ENCODE measurements at regions of chr16 and their contacts with region 1.

Region 1: GRCh38 chr16:17369421-17370222 is 101.1 kb downstream of the XYLT1 start:
- DNase-seq: peak; percentile 60 to 94 (median 81)
- ATAC-seq: peak; percentile 82
- H3K4me3 ChIP-seq: peak overlapping the region; percentile 28 to 49
- H3K4me3 Mint-ChIP-seq: peak overlapping the region; percentile 82
- H3K27ac ChIP-seq: peak overlapping the region; percentile 78 to 84
- H3K27ac Mint-ChIP-seq: peak overlapping the region; percentile 97
- H3K4me1 ChIP-seq: peaks cover 73% of the 10 kb centered on the region
- H3K4me1 Mint-ChIP-seq: peaks cover 89% of the 10 kb centered on the region
- H3K27me3 ChIP-seq: no peaks in the 10 kb centered on the region
- H3K27me3 Mint-ChIP-seq: no peaks in the 10 kb centered on the region
- CTCF ChIP-seq: no peak

Region 2: DNA sequence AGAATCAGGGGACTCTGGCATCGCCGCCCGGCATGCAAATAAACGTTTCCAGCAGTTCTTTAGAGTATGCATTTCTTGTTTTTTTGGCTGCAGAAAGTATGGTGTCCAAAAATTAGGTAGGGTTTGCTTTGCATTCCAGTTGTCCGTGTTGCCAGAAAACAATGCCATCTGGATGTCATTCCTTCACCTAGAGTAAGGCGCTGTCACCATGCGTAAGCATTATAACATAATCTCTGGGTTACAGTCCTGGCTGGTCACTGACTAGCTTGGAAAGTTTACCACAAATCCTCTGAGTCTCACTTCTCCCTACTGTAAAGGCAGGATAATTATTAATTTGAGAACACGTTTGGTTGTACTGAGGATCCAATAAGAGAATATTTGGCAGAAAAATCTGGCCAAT is 356.6 kb before region 1 on chr16:
- CTCF ChIA-PET with region 1: no interaction called
- POLR2A ChIA-PET with region 1: interaction called, 3 read pairs
- intact Hi-C with region 1: loop called in 1 of 2 experiments (anchors 5 kb)
- DNase-seq: no peak
- ATAC-seq: no peak
- H3K4me3 ChIP-seq: peak overlapping the region in 1 of 2 experiments; percentile 44
- H3K4me3 Mint-ChIP-seq: peak overlapping the region; percentile 77
- H3K27ac ChIP-seq: peak overlapping the region; percentile 69 to 78
- H3K27ac Mint-ChIP-seq: peak overlapping the region; percentile 99
- H3K4me1 ChIP-seq: peaks cover 13% of the 10 kb centered on the region
- H3K4me1 Mint-ChIP-seq: peaks cover 30% of the 10 kb centered on the region
- H3K27me3 ChIP-seq: no peaks in the 10 kb centered on the region
- H3K27me3 Mint-ChIP-seq: peaks cover 6% of the 10 kb centered on the region
- CTCF ChIP-seq: no peak

Region 3: GRCh38 chr16:17070882-17071592 is 298.6 kb before region 1 on chr16:
- CTCF ChIA-PET with region 1: no interaction called
- POLR2A ChIA-PET with region 1: no interaction called
- intact Hi-C with region 1: loop called in 1 of 2 experiments (anchors 10 kb)
- DNase-seq: peak; percentile 51 to 94 (median 74)
- ATAC-seq: peak; percentile 85
- H3K4me3 ChIP-seq: peak overlapping the region; percentile 32 to 51
- H3K4me3 Mint-ChIP-seq: peak overlapping the region; percentile 87
- H3K27ac ChIP-seq: peak overlapping the region; percentile 67 to 68
- H3K27ac Mint-ChIP-seq: peak overlapping the region; percentile 97
- H3K4me1 ChIP-seq: peaks cover 4% of the 10 kb centered on the region
- H3K4me1 Mint-ChIP-seq: peaks cover 17% of the 10 kb centered on the region
- H3K27me3 ChIP-seq: no peaks in the 10 kb centered on the region
- H3K27me3 Mint-ChIP-seq: no peaks in the 10 kb centered on the region
- CTCF ChIP-seq: no peak

Region 4: DNA sequence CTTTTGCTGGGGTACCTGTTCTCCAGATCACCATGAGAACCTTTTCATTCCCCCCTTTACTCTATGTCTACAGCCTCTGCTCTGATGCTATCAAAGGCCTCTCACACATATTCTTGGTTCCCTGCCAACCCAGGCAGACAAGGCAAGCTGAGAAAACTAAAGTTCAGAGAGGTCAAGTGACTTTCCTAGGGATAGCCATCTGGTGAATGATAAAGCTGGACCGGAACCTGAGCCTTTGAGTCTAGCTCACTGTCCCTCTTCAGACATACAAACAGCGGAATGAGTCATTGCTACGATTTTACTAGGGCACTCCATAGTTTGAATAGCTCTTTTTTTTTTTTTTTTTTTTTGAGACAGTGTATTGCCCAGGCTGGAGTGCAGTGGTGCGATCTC is 27.9 kb after region 1 on chr16:
- CTCF ChIA-PET with region 1: interaction called, 3 read pairs
- POLR2A ChIA-PET with region 1: interaction called, 9 read pairs
- intact Hi-C with region 1: loop called (anchors 2 to 5 kb)
- DNase-seq: peak in 2 of 9 experiments; percentile 47 to 54
- ATAC-seq: no peak
- H3K4me3 ChIP-seq: no peak overlapping the region
- H3K4me3 Mint-ChIP-seq: no peak overlapping the region
- H3K27ac ChIP-seq: peak overlapping the region; percentile 19 to 63
- H3K27ac Mint-ChIP-seq: peak overlapping the region; percentile 91
- H3K4me1 ChIP-seq: peaks cover 15% of the 10 kb centered on the region
- H3K4me1 Mint-ChIP-seq: peaks cover 48% of the 10 kb centered on the region
- H3K27me3 ChIP-seq: no peaks in the 10 kb centered on the region
- H3K27me3 Mint-ChIP-seq: no peaks in the 10 kb centered on the region
- CTCF ChIP-seq: no peak

Region 5: GRCh38 chr16:18789850-18790724 is 1420.5 kb after region 1 on chr16 and contains the start of gene RPS15A:
- CTCF ChIA-PET with region 1: no interaction called
- POLR2A ChIA-PET with region 1: interaction called, 5 read pairs
- intact Hi-C with region 1: loop called in 1 of 2 experiments (anchors 10 kb)
- DNase-seq: peak; percentile 81 to 99 (median 91)
- ATAC-seq: peak; percentile 96
- H3K4me3 ChIP-seq: peak within 1 kb of the TSS; percentile 98 to 100
- H3K4me3 Mint-ChIP-seq: peak within 1 kb of the TSS; percentile 95
- H3K27ac ChIP-seq: peak within 1 kb of the TSS; percentile 76 to 88
- H3K27ac Mint-ChIP-seq: peak within 1 kb of the TSS; percentile 88
- H3K4me1 ChIP-seq: peaks cover 39% of the 10 kb centered on the region
- H3K4me1 Mint-ChIP-seq: peaks cover 50% of the 10 kb centered on the region
- H3K27me3 ChIP-seq: no peaks in the 10 kb centered on the region
- H3K27me3 Mint-ChIP-seq: no peaks in the 10 kb centered on the region
- CTCF ChIP-seq: no peak
- total RNA-seq, gene RPS15A: 3,671 to 3,755 TPM

Measured in CD8-positive, alpha-beta T cell (primary cell).